Activated B cell treated with CpG ODN at 0.5 μM for 24 hours (primary cell): ENCODE measurements at regions of chr17 and their contacts with region 1.

Region 1: DNA sequence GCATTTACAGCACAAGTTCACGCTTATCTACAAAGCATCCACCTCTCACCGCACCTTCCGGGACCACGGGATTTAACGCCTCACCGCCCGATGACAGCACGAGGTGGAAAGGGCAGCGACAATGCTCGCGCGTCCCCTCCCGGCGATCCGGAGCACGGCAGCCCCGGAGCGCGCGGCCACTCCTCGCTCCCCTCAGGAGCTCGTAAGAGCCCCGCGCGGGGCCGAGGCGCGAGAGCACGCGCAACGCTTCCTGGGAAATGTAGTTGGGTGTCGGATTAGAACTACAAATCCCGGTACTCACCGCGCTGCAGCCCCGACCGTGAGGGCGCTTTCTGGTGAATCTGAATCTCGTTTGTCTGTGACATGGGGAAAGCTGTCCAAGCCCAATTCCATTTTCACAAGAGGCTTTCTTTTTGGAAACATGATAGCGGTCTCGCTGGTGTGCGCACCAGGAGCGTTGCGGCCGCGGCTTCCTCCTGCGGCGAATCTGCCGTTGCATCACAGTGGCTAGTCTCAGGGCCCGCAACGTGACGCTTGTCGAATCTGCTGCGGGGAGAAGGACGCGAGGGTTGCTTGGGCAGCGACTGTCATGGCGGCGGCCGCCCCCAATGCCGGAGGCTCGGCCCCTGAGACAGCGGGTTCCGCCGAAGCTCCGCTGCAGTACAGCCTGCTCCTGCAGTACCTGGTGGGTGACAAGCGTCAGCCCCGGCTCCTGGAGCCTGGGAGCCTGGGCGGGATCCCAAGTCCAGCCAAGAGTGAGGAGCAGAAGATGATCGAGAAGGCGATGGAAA is at the start of gene TIMM22:
- DNase-seq: peak; percentile 91
- ATAC-seq: peak; percentile 92
- H3K4me3 Mint-ChIP-seq: peak within 1 kb of the TSS; percentile 98
- H3K27ac Mint-ChIP-seq: peak within 1 kb of the TSS; percentile 98
- H3K4me1 Mint-ChIP-seq: peaks cover 21% of the 10 kb centered on the region
- H3K27me3 Mint-ChIP-seq: no peaks in the 10 kb centered on the region
- CTCF ChIP-seq: peak; percentile 50
- total RNA-seq, gene TIMM22: 10.7 and 11.1 TPM in 2 replicates

Region 2: GRCh38 chr17:218442-219110 is 778.2 kb before region 1 on chr17:
- CTCF ChIA-PET with region 1: no interaction called
- POLR2A ChIA-PET with region 1: no interaction called
- intact Hi-C with region 1: loop called (anchors 10 kb)
- DNase-seq: no peak
- ATAC-seq: no peak
- H3K4me3 Mint-ChIP-seq: no peak overlapping the region
- H3K27ac Mint-ChIP-seq: no peak overlapping the region
- H3K4me1 Mint-ChIP-seq: peaks cover 8% of the 10 kb centered on the region
- H3K27me3 Mint-ChIP-seq: no peaks in the 10 kb centered on the region
- CTCF ChIP-seq: no peak

Region 3: GRCh38 chr17:752002-752619 is 244.6 kb before region 1 on chr17 and contains the start of gene GEMIN4:
- CTCF ChIA-PET with region 1: no interaction called
- POLR2A ChIA-PET with region 1: interaction called, 9 read pairs
- intact Hi-C with region 1: loop called (anchors 1 kb)
- DNase-seq: peak; percentile 100
- ATAC-seq: peak; percentile 90
- H3K4me3 Mint-ChIP-seq: peak within 1 kb of the TSS; percentile 91
- H3K27ac Mint-ChIP-seq: peak within 1 kb of the TSS; percentile 94
- H3K4me1 Mint-ChIP-seq: peaks cover 31% of the 10 kb centered on the region
- H3K27me3 Mint-ChIP-seq: no peaks in the 10 kb centered on the region
- CTCF ChIP-seq: no peak
- total RNA-seq, gene GEMIN4: 30.5 and 33.3 TPM in 2 replicates

Region 4: DNA sequence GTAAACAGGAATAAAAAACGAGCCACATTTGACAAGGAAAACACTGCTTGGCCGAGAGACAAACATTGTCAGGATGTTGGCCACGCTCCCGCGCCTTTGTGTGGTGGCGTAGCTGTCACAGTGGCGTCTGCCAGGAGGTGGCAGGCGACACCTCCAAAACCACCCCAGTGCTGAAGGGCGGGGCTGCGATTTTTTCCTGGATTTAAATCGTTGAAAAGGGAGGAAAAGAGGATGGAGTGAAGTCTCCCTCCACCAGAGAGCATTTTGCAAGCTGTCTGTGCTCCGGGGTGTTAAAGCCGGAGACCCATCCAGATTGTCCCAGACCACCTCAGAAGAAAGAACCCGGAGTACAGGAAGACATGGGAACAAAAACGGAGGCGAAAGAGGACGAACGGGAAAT is 201.9 kb before region 1 on chr17:
- CTCF ChIA-PET with region 1: interaction called, 17 read pairs
- POLR2A ChIA-PET with region 1: interaction called, 6 read pairs
- intact Hi-C with region 1: loop called (anchors 1 kb)
- DNase-seq: no peak
- ATAC-seq: peak; percentile 58
- H3K4me3 Mint-ChIP-seq: no peak overlapping the region
- H3K27ac Mint-ChIP-seq: no peak overlapping the region
- H3K4me1 Mint-ChIP-seq: peaks cover 7% of the 10 kb centered on the region
- H3K27me3 Mint-ChIP-seq: no peaks in the 10 kb centered on the region
- CTCF ChIP-seq: no peak

Region 5: DNA sequence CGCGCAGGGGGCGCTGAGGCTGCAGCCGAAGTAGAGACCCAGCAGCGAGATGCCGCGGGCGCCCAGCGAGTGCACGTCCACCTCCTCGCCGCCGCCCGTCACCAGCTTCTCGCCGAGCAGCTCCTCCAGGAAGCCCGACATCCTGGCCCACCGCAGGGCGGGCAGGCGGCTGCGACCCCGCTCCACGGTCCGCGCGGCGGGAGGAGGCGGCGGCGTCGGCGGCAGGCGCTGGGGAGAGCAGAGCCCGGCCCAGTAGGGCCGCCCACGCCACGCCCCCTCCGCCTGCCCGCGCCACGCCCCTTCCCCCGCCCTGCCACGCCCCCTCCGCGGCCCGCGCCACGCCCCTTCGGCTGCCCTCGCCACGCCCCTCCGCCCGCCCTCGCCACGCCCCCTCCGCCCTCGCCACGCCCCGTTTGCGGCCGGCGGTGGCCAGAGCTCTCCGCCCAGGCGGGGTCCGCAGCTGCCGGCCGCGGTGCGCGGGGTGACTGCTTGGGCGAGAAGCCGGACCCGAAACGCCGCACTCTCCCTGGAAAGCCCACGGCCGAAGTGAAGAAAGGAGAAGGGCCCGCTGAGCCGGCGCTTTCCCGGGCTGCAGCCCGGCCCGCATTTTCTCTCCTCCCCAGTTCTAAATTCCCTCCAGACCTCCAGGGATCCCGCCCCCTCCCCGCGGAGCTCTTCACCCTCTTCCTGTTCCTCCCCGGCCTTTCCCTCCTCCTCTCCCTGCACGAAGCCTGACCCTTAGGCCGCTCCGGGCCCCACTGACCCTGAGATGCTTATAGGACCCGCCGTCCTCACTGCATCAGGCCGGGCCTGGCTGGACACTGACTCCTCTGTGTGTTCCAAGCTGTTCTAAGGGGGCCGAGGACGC is 17.0 kb before region 1 on chr17 and contains the start of gene NXN:
- CTCF ChIA-PET with region 1: interaction called, 29 read pairs
- POLR2A ChIA-PET with region 1: interaction called, 36 read pairs
- intact Hi-C with region 1: loop called (anchors 1 kb)
- DNase-seq: peak; percentile 93
- ATAC-seq: peak; percentile 87
- H3K4me3 Mint-ChIP-seq: peak within 1 kb of the TSS; percentile 83
- H3K27ac Mint-ChIP-seq: peak within 1 kb of the TSS; percentile 61
- H3K4me1 Mint-ChIP-seq: peaks cover 19% of the 10 kb centered on the region
- H3K27me3 Mint-ChIP-seq: peaks cover 25% of the 10 kb centered on the region
- CTCF ChIP-seq: no peak
- total RNA-seq, gene NXN: 0.15 and 0.22 TPM in 2 replicates

Region 6: DNA sequence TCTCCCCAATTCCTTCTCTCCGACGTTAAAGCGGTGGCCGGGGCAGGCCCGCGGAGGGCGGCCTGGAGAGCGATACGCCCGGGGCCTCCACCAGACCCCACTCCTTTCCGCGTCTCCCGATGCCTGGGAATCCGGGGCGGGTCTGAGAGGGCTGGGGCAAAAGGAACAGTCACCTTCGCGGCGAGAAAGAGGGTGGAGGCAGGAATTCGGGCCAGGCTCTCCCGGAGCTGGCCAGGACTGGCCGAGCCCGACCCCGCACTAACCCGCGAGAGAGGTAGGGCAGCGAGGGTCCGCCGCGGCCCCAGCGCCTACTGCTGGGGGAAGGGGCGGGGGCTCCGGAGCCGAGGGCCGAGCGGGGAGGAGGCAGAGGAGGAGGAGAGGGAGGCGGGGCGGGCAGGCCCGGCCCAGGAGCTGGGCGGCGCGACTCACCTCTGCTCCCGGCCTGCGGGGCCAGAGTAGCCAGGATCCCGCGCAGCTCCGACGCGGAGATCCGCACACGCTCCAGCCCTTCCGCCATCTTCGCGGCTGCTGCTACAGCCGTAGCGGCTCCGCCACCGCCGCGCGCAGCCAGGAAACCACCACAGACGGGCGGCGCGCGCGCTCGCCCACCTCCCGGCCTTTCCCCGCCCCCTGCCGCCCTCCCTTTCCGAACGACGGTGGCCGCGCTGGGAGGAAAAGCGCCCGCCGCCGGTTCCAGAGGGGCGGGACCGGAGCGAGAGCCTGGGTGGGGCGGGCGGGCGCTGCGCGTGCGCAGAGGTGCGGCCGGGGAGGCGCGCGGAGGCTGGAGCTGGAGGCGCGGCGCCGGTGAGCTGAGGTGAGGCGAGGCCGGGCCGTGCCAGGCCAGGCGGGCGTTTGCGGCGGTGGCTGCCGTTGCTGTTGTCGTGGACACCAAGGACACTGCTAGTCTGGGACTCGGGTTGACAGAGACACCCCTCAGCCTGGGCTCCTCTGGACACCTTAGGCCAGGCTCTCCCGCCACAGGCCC is 1306.7 kb after region 1 on chr17 and contains the starts of genes SMG6 and SRR:
- CTCF ChIA-PET with region 1: no interaction called
- POLR2A ChIA-PET with region 1: no interaction called
- intact Hi-C with region 1: loop called (anchors 5 kb)
- DNase-seq: peak; percentile 87
- ATAC-seq: peak; percentile 90
- H3K4me3 Mint-ChIP-seq: peak within 1 kb of the TSS; percentile 88
- H3K27ac Mint-ChIP-seq: peak within 1 kb of the TSS; percentile 65
- H3K4me1 Mint-ChIP-seq: peaks cover 14% of the 10 kb centered on the region
- H3K27me3 Mint-ChIP-seq: no peaks in the 10 kb centered on the region
- CTCF ChIP-seq: no peak
- total RNA-seq, gene SMG6: 22.0 and 30.5 TPM in 2 replicates
- total RNA-seq, gene SRR: 5.7 and 8.6 TPM in 2 replicates